OCI-LY7 (cell line): ENCODE measurements at regions of chr15 and their contacts with region 1.

Region 1: DNA sequence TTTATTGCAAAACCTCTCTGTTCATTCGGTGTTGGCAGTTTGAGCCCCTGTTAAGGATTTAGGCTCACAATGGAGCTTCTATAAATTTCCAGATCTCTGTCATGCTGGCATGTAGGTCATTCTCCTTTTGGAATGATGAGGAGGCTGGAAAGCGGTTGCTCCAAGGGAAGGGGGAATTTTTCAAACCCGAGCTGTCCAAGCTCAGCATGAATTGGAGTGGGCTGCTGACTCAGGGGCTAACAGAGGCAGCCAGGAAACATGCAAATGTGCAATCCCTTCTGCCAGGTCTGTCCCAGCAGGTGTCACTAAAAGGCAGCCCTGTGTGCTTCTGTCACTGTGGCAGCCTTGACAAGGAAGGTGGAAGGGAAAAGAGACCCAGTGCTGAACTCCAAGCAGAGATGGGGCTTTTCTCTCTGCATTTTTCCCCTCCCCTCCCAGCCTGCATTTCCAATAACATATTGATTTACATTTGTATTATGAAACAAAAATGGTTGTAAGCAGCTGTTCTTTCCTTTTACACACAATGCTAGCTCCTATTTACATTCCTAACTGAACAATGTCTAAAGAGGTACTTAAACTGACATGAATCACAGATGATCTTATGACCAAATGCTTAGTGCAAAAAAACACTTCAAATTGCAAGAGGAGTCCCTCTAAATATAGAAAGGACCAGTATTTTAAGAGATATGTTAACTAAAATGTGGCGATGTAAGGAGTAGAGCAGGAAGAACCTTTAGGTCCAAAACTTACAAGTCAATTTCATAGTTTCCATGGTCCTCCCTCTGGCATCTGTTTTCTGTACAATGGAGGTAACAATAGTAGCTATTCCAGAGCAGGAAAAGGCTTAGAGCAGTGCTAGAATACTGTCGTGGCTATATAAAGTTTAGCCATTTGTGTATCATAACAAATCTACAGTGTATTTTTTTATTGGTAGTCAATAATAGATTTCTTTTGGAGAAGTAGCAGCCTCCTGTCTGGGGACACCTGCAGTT is 84.5 kb upstream of the ATP10A start:
- DNase-seq: peak; percentile 64
- H3K4me3 ChIP-seq: no peak overlapping the region
- H3K27ac ChIP-seq: no peak overlapping the region
- H3K4me1 ChIP-seq: peaks cover 30% of the 10 kb centered on the region
- CTCF ChIP-seq: peak; percentile 68

Region 2: DNA sequence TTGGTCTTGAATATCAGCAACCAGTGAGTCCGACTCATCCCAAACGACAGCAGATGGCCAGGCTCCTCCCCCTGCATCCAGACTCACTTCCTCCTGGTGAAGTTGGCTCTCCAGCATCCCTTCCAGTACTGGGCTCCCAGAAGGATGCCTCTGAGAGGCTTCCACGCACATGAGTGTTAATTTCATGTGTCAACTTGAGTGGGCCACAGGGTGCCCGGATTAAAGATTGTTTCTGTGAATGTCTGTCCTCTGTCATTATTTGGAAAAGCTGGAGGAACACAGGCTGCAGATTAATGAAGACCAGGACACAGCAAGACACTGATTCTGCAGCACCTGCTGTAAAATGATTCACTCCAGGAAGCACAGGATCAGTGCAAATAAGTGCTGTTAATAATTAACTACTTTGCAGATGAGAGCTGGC is 184.3 kb before region 1 on chr15:
- CTCF ChIA-PET with region 1: no interaction called
- POLR2A ChIA-PET with region 1: no interaction called
- intact Hi-C with region 1: no loop called
- DNase-seq: no peak
- H3K4me3 ChIP-seq: no peak overlapping the region
- H3K27ac ChIP-seq: no peak overlapping the region
- H3K4me1 ChIP-seq: no peaks in the 10 kb centered on the region
- CTCF ChIP-seq: no peak

Region 3: GRCh38 chr15:26082221-26083109 is 134.8 kb after region 1 on chr15:
- CTCF ChIA-PET with region 1: no interaction called
- POLR2A ChIA-PET with region 1: interaction called, 5 read pairs
- intact Hi-C with region 1: loop called (anchors 2 kb)
- DNase-seq: peak; percentile 89
- H3K4me3 ChIP-seq: peak overlapping the region; percentile 68
- H3K27ac ChIP-seq: peak overlapping the region; percentile 67
- H3K4me1 ChIP-seq: peaks cover 16% of the 10 kb centered on the region
- CTCF ChIP-seq: no peak

Region 4: DNA sequence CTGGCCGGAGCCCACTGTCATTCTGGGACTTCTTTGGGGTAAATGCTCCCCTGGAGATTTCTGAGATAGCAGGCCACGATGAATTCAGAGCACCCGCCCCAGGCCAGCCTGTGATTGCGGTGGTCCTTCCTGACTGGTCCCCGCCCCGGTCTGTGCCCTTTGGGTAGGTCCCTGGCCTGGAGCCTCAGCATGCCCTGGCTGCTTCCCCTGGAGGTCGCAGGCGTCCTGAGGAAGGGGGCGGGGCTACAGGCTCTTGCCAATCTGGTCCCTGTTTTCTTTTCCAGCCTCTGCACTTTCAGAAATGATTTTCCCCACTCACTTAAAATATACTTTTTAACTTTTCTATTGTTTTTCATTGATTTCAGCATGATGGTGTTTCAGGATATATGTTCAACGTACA is 165.7 kb after region 1 on chr15:
- CTCF ChIA-PET with region 1: no interaction called
- POLR2A ChIA-PET with region 1: no interaction called
- intact Hi-C with region 1: no loop called
- DNase-seq: no peak
- H3K4me3 ChIP-seq: no peak overlapping the region
- H3K27ac ChIP-seq: no peak overlapping the region
- H3K4me1 ChIP-seq: no peaks in the 10 kb centered on the region
- CTCF ChIP-seq: no peak

Region 5: GRCh38 chr15:26260517-26261133 is 313.0 kb after region 1 on chr15:
- CTCF ChIA-PET with region 1: interaction called, 3 read pairs
- POLR2A ChIA-PET with region 1: interaction called, 4 read pairs
- intact Hi-C with region 1: loop called (anchors 1 kb)
- DNase-seq: peak; percentile 51
- H3K4me3 ChIP-seq: no peak overlapping the region
- H3K27ac ChIP-seq: no peak overlapping the region
- H3K4me1 ChIP-seq: no peaks in the 10 kb centered on the region
- CTCF ChIP-seq: peak; percentile 81

Region 6: DNA sequence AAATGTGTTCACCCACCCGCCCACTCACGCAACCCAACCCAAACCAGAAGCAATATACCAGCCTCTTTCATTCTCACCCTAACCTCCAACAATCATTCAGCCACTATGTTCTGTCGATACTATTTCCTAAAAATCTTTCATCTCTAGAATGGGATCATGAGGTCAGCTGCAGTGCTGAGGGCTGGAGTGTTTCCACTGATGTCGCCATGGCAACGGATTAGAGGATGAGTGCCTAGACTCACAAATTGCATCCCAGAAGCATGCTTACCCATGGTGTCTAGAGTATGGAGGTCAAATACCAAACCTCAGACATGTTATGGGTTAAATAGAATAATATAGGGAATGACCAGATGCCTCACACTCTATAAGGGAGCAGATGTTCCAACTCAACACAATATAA is 686.7 kb after region 1 on chr15:
- CTCF ChIA-PET with region 1: no interaction called
- POLR2A ChIA-PET with region 1: no interaction called
- intact Hi-C with region 1: loop called (anchors 10 kb)
- DNase-seq: no peak
- H3K4me3 ChIP-seq: no peak overlapping the region
- H3K27ac ChIP-seq: no peak overlapping the region
- H3K4me1 ChIP-seq: peaks cover 36% of the 10 kb centered on the region
- CTCF ChIP-seq: no peak